ENCODE measurements at regions of chr7 and their contacts with region 1.

Region 1: GRCh38 chr7:20152511-20152910 is 64.7 kb downstream of the MACC1 start:
- DNase-seq: peak in 1 of 2 experiments; percentile 62
- H3K4me3 ChIP-seq: no peak overlapping the region
- H3K27ac ChIP-seq: 0 out of 2 replicates have a peak overlapping the region, but pooled peaks have one; percentile 13
- H3K4me1 ChIP-seq: peaks cover 15% of the 10 kb centered on the region
- H3K27me3 ChIP-seq: no peaks in the 10 kb centered on the region
- CTCF ChIP-seq: no peak

Region 2: GRCh38 chr7:19964246-19964645 is 188.3 kb before region 1 on chr7:
- CTCF ChIA-PET with region 1: no interaction called
- POLR2A ChIA-PET with region 1: no interaction called
- intact Hi-C with region 1: no loop called
- DNase-seq: no peak
- H3K4me3 ChIP-seq: no peak overlapping the region
- H3K27ac ChIP-seq: no peak overlapping the region
- H3K4me1 ChIP-seq: peaks cover 13% of the 10 kb centered on the region
- H3K27me3 ChIP-seq: no peaks in the 10 kb centered on the region
- CTCF ChIP-seq: no peak

Region 3: GRCh38 chr7:20257212-20257611 is 104.7 kb after region 1 on chr7:
- CTCF ChIA-PET with region 1: no interaction called
- POLR2A ChIA-PET with region 1: no interaction called
- intact Hi-C with region 1: loop called (anchors 5 kb)
- DNase-seq: no peak
- H3K4me3 ChIP-seq: no peak overlapping the region
- H3K27ac ChIP-seq: no peak overlapping the region
- H3K4me1 ChIP-seq: no peaks in the 10 kb centered on the region
- H3K27me3 ChIP-seq: no peaks in the 10 kb centered on the region
- CTCF ChIP-seq: no peak

Measured in PC-9 (cell line).